Prostate gland (tissue), 2 donors: ENCODE measurements at regions of chr3 and their contacts with region 1.

Region 1: GRCh38 chr3:195238586-195239118 is 32.3 kb downstream of the XXYLT1 start:
- DNase-seq: no peak
- H3K4me3 ChIP-seq: no peak overlapping the region
- H3K27ac ChIP-seq: peak overlapping the region; percentile 57 to 64
- H3K4me1 ChIP-seq: no peaks in the 10 kb centered on the region
- H3K27me3 ChIP-seq: no peaks in the 10 kb centered on the region
- CTCF ChIP-seq: no peak
- POLR2A ChIP-seq: no peak

Region 2: DNA sequence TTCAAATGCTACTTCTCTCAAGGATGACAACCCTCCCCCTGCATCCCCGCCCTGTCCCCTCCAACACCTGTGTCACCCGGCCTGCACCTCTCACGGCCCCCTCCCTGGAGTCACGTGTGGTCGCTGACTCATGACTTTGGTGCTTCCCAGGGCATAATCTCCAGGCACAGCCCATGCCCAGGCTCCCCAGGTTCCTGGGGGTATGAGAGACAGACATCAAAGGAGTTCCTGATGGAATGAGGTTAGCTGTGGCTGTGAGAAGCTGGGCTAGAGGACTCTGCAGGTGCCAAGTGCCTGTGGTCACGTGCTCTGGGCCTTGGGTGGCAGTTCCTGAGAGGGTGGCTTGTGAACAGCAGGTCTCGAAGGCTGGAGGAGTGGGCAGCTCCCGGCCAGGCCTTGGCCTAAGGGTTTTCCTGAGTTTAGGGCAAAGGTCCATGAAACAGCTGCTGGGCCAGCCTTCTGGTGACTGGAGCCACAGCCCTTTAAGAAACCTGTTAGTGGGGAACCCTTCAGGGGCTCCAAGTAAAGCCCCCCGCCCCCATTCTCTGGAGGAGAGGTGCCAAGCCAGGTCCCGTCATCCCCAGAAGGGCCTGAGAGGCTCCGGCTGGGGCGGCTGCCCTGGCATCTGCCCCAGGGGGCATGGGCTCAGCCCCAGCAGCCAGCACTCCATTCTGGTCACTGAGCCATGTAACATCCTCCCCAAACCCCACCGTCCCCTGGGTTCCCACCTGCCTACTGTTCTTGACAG is 197.7 kb before region 1 on chr3:
- intact Hi-C with region 1: no loop called
- DNase-seq: no peak
- H3K4me3 ChIP-seq: no peak overlapping the region
- H3K27ac ChIP-seq: no peak overlapping the region
- H3K4me1 ChIP-seq: no peaks in the 10 kb centered on the region
- H3K27me3 ChIP-seq: no peaks in the 10 kb centered on the region
- CTCF ChIP-seq: no peak
- POLR2A ChIP-seq: no peak

Region 3: DNA sequence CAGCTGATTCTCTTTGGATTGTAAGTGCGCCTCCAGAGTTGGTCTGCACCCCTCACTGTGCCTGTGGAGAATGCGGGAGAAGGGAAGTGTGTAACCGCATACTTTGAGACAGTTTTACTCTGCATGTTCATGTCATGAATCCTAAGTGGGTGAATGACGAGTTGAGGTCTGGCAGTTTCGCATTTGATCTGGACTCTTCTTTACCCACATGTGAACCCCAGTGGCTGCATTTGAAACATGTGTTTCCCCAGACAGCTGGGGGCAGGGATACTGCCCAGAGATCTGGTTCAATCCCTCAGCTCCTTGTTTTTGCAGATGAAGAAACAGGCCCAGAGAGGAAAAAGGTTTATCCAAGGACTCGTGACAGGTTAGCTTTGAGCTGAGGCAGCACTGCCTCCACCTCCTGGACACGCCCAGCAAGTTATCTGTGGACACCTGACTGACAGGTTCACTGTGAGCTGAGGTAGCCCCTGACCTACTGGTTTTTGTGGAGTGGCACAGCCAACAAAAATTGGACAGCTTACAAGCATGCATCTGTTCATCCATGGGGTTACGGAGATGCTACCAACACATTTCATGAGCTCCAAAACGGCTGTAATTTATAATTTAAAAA is 175.0 kb before region 1 on chr3:
- intact Hi-C with region 1: no loop called
- DNase-seq: no peak
- H3K4me3 ChIP-seq: no peak overlapping the region
- H3K27ac ChIP-seq: no peak overlapping the region
- H3K4me1 ChIP-seq: no peaks in the 10 kb centered on the region
- H3K27me3 ChIP-seq: no peaks in the 10 kb centered on the region
- CTCF ChIP-seq: no peak
- POLR2A ChIP-seq: no peak

Region 4: DNA sequence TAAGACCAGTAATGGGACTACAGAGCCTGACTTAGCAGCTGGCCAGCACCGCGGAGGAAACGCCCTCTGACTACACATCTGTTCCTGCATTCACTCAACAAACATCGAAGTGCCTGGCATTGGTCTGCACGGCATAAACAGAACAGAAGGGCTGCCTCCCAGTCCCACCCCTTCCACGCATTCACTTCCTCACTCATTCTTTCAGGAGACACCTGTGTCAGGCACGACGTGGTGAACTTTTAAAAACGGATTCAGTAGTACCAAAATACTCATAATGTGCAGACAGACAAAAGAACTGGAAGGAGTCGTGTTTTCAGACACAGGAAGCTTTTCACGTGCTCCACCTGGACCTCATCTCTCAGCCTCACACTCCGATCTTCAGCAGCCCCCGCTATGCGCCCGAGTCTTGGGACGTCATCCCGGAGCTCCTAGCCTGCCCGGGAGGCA is 91.0 kb before region 1 on chr3:
- intact Hi-C with region 1: loop called (anchors 5 kb)
- DNase-seq: no peak
- H3K4me3 ChIP-seq: peak overlapping the region in 1 of 2 donors; percentile 1
- H3K27ac ChIP-seq: no peak overlapping the region
- H3K4me1 ChIP-seq: peaks cover 9% of the 10 kb centered on the region
- H3K27me3 ChIP-seq: no peaks in the 10 kb centered on the region
- CTCF ChIP-seq: no peak
- POLR2A ChIP-seq: no peak

Region 5: DNA sequence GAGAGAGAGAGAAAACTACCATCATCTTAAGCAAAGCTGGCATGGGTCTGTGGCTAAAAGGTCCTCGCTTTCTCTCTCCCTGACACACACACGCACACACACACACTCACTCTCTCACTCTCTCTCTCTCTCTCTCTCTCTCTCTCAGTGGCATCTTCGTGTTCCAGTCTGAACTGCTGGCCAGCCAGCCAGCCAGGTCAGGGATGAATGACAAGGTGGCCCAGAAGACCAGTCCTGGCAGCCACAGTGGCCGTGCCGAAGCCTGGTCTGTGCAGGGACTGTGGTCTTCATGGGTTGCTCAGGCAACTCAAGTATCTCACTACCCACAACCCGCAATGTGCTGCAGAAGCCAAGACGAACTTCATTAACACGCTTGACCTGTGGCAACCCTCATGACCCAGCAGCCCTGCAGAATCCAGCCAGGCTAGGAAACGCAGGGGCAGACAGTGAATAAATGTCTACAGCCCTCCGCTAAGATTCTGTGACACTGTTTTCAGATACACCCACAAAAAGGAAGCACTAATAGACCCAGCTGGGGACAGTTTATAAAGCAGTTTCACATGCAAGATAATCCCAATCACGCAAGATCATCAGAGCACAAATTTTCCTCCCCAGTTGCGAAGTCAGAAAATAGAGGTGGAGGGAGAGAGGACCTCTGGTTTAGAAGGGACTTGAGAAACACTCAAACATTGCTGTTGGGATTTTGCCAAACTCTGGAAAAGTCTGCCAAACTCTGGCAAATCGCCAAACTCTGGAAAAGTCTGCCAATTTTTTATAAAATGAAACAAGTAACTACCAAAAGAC is 34.1 kb before region 1 on chr3:
- intact Hi-C with region 1: loop called (anchors 5 kb)
- DNase-seq: no peak
- H3K4me3 ChIP-seq: no peak overlapping the region
- H3K27ac ChIP-seq: no peak overlapping the region
- H3K4me1 ChIP-seq: peaks cover 3% of the 10 kb centered on the region
- H3K27me3 ChIP-seq: no peaks in the 10 kb centered on the region
- CTCF ChIP-seq: no peak
- POLR2A ChIP-seq: no peak

Region 6: DNA sequence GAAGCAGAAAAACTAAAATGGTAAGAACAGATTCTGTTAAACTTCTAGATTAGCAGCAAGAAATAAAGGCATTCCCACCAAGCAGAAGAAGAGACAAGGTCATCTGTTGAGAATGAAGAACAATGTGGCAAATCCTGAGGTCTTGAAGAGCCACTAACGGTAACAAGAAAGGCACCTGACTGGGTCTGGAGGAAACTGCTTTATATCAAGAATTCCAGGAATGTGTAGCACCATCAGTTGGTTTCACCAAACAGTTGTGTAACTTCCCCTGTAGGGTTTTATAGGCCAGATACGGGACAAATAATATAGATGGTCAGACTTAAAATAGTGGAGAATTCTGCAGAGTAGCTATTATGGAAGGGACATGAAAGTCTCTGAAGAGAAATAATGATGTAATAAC is 146.9 kb after region 1 on chr3:
- intact Hi-C with region 1: no loop called
- DNase-seq: no peak
- H3K4me3 ChIP-seq: no peak overlapping the region
- H3K27ac ChIP-seq: no peak overlapping the region
- H3K4me1 ChIP-seq: no peaks in the 10 kb centered on the region
- H3K27me3 ChIP-seq: no peaks in the 10 kb centered on the region
- CTCF ChIP-seq: no peak
- POLR2A ChIP-seq: no peak